CD4-positive, alpha-beta memory T cell (primary cell): ENCODE measurements at regions of chr1 and their contacts with region 1.

Region 1: GRCh38 chr1:160291248-160292220 is 6.6 kb upstream of the PEX19 start:
- DNase-seq: peak; percentile 75 to 79 (median 76)
- H3K4me3 ChIP-seq: no peak overlapping the region
- H3K4me3 Mint-ChIP-seq: no peak overlapping the region
- H3K27ac ChIP-seq: no peak overlapping the region
- H3K27ac Mint-ChIP-seq: peak overlapping the region; percentile 0 to 90 (median 77)
- H3K4me1 ChIP-seq: no peaks in the 10 kb centered on the region
- H3K4me1 Mint-ChIP-seq: peaks cover 4 to 10% (median 4%) of the 10 kb centered on the region in 4 donors
- H3K27me3 ChIP-seq: no peaks in the 10 kb centered on the region
- H3K27me3 Mint-ChIP-seq: no peaks in the 10 kb centered on the region

Region 2: GRCh38 chr1:160098852-160099561 is 192.5 kb before region 1 on chr1:
- CTCF ChIA-PET with region 1: interaction called, 52 read pairs
- POLR2A ChIA-PET with region 1: interaction called, 14 read pairs
- intact Hi-C with region 1: loop called (anchors 1 kb)
- DNase-seq: peak; percentile 95 to 98 (median 95)
- H3K4me3 ChIP-seq: peak overlapping the region; percentile 74
- H3K4me3 Mint-ChIP-seq: peak overlapping the region; percentile 78 to 87 (median 82)
- H3K27ac ChIP-seq: peak overlapping the region; percentile 96
- H3K27ac Mint-ChIP-seq: peak overlapping the region; percentile 93 to 98 (median 97)
- H3K4me1 ChIP-seq: peaks cover 55% of the 10 kb centered on the region
- H3K4me1 Mint-ChIP-seq: peaks cover 24 to 63% (median 46%) of the 10 kb centered on the region in 4 donors
- H3K27me3 ChIP-seq: no peaks in the 10 kb centered on the region
- H3K27me3 Mint-ChIP-seq: peaks cover 0 to 2% of the 10 kb centered on the region in 2 donors

Region 3: GRCh38 chr1:160219062-160219929 is 72.2 kb before region 1 on chr1:
- CTCF ChIA-PET with region 1: interaction called, 14 read pairs
- POLR2A ChIA-PET with region 1: no interaction called
- intact Hi-C with region 1: no loop called
- DNase-seq: no peak
- H3K4me3 ChIP-seq: no peak overlapping the region
- H3K4me3 Mint-ChIP-seq: no peak overlapping the region
- H3K27ac ChIP-seq: no peak overlapping the region
- H3K27ac Mint-ChIP-seq: peak overlapping the region in 3 of 7 donors; percentile 7 to 46 (median 16)
- H3K4me1 ChIP-seq: no peaks in the 10 kb centered on the region
- H3K4me1 Mint-ChIP-seq: no peaks in the 10 kb centered on the region
- H3K27me3 ChIP-seq: no peaks in the 10 kb centered on the region
- H3K27me3 Mint-ChIP-seq: no peaks in the 10 kb centered on the region

Region 4: DNA sequence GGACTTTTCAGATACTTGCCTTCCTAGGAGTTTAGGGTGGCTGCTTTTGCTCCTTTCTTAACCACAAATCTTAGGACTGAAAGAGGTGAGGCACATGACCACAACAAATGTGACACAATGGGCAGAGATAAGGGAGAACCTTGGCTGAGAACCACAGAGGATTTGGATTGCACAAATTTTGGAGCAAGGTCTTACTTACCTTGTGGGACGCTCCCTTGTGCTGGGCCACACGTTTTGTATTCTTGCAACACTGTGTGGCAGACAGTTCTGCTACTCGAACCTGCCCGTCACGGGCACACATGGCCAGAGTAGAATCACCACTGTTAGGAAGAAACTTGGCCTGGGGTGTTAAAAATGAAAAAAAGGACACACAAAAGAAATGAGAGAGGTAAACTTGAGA is 53.1 kb before region 1 on chr1:
- CTCF ChIA-PET with region 1: interaction called, 26 read pairs
- POLR2A ChIA-PET with region 1: no interaction called
- intact Hi-C with region 1: no loop called
- DNase-seq: no peak
- H3K4me3 ChIP-seq: no peak overlapping the region
- H3K4me3 Mint-ChIP-seq: no peak overlapping the region
- H3K27ac ChIP-seq: no peak overlapping the region
- H3K27ac Mint-ChIP-seq: peak overlapping the region in 1 of 7 donors; percentile 36
- H3K4me1 ChIP-seq: peaks cover 6% of the 10 kb centered on the region
- H3K4me1 Mint-ChIP-seq: peaks cover 2 to 19% (median 14%) of the 10 kb centered on the region in 4 donors
- H3K27me3 ChIP-seq: no peaks in the 10 kb centered on the region
- H3K27me3 Mint-ChIP-seq: no peaks in the 10 kb centered on the region

Region 5: GRCh38 chr1:160271025-160271424 is 20.5 kb before region 1 on chr1:
- CTCF ChIA-PET with region 1: interaction called, 86 read pairs
- POLR2A ChIA-PET with region 1: interaction called, 3 read pairs
- intact Hi-C with region 1: no loop called
- DNase-seq: no peak
- H3K4me3 ChIP-seq: no peak overlapping the region
- H3K4me3 Mint-ChIP-seq: no peak overlapping the region
- H3K27ac ChIP-seq: no peak overlapping the region
- H3K27ac Mint-ChIP-seq: no peak overlapping the region
- H3K4me1 ChIP-seq: no peaks in the 10 kb centered on the region
- H3K4me1 Mint-ChIP-seq: peaks cover 0 to 2% (median 0%) of the 10 kb centered on the region in 4 donors
- H3K27me3 ChIP-seq: no peaks in the 10 kb centered on the region
- H3K27me3 Mint-ChIP-seq: no peaks in the 10 kb centered on the region

Region 6: DNA sequence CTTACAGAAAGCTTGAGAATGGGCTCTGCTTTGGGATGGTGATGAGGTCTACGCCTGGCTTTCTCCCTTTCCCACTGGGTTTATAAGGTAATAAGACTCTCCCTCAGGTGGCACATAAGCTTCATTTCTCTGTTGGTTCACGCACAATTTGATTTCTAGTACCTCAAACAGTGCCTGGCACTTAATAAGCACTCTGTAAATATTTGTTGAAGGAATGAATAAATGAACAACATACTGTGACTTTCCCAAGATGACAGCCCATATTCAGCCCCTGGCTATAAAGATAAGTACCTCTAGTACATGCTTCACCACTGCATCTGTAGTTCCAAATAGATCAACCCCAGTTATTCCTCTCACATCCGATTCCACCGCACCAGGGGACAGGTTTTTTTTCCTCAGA is 33.7 kb after region 1 on chr1:
- CTCF ChIA-PET with region 1: interaction called, 13 read pairs
- POLR2A ChIA-PET with region 1: interaction called, 3 read pairs
- intact Hi-C with region 1: no loop called
- DNase-seq: no peak
- H3K4me3 ChIP-seq: no peak overlapping the region
- H3K4me3 Mint-ChIP-seq: no peak overlapping the region
- H3K27ac ChIP-seq: no peak overlapping the region
- H3K27ac Mint-ChIP-seq: peak overlapping the region in 1 of 7 donors; percentile 57
- H3K4me1 ChIP-seq: no peaks in the 10 kb centered on the region
- H3K4me1 Mint-ChIP-seq: peaks cover 10 to 22% (median 15%) of the 10 kb centered on the region in 4 donors
- H3K27me3 ChIP-seq: no peaks in the 10 kb centered on the region
- H3K27me3 Mint-ChIP-seq: no peaks in the 10 kb centered on the region

Region 7: DNA sequence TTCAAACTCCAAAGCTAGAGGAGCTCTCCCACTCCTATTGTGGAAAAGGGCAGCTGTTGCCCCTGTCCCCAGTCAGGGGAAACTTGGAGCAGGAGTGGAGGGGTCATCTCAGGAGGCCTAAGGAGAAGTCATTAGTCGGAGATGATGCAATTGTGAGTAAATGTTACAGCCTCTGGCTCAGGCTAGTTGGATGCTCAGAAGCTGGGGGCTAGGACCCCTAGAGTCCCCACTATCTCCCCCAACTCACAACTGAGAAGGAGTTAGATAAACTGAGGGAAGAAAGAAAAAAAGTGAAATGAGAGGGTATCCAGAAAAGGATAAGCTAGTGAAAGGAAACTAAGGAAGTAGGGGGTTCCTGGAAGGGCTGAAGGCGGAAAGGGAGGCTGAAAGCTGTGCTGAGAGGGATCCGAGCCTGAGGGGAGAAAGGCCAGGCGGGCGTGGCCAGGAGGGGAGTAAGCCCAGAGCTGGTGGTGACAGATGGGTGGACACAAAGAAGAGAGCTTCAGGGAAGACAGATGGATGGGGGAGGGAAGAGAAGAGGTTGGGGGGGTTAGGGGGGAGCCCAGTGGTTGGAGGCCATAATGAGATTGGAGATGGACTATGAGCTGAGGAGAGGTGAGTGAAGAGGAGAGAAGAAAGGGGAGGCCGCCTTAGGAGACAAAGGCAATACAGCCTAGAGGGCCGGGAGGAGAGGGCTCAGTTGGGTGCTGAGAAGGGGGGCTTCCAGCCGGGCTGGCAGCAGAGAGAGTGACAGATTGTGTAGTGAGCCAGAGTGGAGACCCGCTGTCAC is 70.8 kb after region 1 on chr1:
- CTCF ChIA-PET with region 1: no interaction called
- POLR2A ChIA-PET with region 1: no interaction called
- intact Hi-C with region 1: no loop called
- DNase-seq: no peak
- H3K4me3 ChIP-seq: no peak overlapping the region
- H3K4me3 Mint-ChIP-seq: no peak overlapping the region
- H3K27ac ChIP-seq: no peak overlapping the region
- H3K27ac Mint-ChIP-seq: peak overlapping the region in 6 of 7 donors; percentile 20 to 85 (median 46)
- H3K4me1 ChIP-seq: no peaks in the 10 kb centered on the region
- H3K4me1 Mint-ChIP-seq: peaks cover 0 to 5% (median 4%) of the 10 kb centered on the region in 4 donors
- H3K27me3 ChIP-seq: no peaks in the 10 kb centered on the region
- H3K27me3 Mint-ChIP-seq: no peaks in the 10 kb centered on the region

Region 8: DNA sequence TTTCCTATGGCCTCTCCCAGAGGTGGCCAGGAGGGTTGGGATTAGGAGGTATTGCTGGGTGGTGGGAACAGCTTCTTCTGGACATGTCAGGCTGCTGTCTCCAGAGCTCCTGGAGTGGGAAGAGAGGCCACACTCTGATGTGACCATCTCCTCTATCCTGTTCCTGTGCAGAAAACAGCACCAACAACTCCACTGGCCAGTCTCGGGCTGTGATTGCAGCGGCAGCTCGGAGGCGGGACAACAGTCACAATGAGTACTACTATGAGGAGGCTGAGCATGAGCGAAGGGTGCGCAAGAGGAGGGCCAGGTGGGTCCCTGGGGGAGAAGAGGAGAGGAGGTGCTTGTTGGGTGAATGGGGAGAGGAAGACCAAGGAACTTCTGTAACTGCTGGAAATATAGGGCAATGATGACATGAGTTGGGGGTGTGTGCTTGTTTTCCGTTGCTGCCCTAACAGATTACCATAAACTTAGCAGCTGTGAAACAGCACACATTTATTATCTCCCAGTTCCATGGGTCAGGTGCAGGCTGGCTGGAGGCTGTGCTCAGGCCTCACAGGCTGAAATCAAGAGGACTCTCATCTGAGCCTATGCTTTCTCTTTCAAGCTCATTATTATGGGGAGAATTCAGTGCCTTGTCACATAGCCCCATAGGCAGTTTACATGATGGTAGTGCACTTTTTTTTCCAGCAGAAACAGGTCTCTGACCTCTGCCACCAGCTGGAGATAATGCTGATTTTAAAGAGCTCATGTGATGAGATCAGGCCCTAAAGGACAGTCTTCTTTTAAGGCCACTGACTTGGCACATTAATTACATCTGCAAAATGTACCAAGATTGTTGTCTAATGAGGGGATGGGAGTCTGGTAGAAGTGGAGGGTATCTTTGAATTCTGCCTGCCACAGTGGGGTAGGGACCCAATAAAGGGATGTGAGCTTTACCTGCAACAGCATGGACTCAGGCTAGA is 129.6 kb after region 1 on chr1:
- CTCF ChIA-PET with region 1: no interaction called
- POLR2A ChIA-PET with region 1: no interaction called
- intact Hi-C with region 1: no loop called
- DNase-seq: no peak
- H3K4me3 ChIP-seq: no peak overlapping the region
- H3K4me3 Mint-ChIP-seq: no peak overlapping the region
- H3K27ac ChIP-seq: no peak overlapping the region
- H3K27ac Mint-ChIP-seq: peak overlapping the region in 1 of 7 donors; percentile 59
- H3K4me1 ChIP-seq: no peaks in the 10 kb centered on the region
- H3K4me1 Mint-ChIP-seq: no peaks in the 10 kb centered on the region
- H3K27me3 ChIP-seq: no peaks in the 10 kb centered on the region
- H3K27me3 Mint-ChIP-seq: peaks cover 0 to 5% of the 10 kb centered on the region in 2 donors